SK-N-SH (cell line): ENCODE measurements at regions of chr10 and their contacts with region 1.

Region 1: GRCh38 chr10:12902135-12902572 is 99.4 kb downstream of the CCDC3 start:
- DNase-seq: peak; percentile 83
- H3K4me3 ChIP-seq: no peak overlapping the region; a peak in 1 of 4 replicates
- H3K27ac ChIP-seq: no peak overlapping the region
- H3K4me1 ChIP-seq: no peaks in the 10 kb centered on the region
- H3K27me3 ChIP-seq: no peaks in the 10 kb centered on the region; the same call in 1 of the 2 replicates
- CTCF ChIP-seq: peak; percentile 86
- EP300 ChIP-seq: no peak
- RAD21 ChIP-seq: peak; percentile 89

Region 2: GRCh38 chr10:12782537-12782936 is 119.6 kb before region 1 on chr10:
- CTCF ChIA-PET with region 1: interaction called, 51 read pairs
- POLR2A ChIA-PET with region 1: no interaction called
- DNase-seq: peak; percentile 64
- H3K4me3 ChIP-seq: peak overlapping the region in 1 of 2 experiments; percentile 26; a peak in 1 of 4 replicates
- H3K27ac ChIP-seq: no peak overlapping the region; a peak in 1 of 4 replicates
- H3K4me1 ChIP-seq: peaks cover 0 to 8% of the 10 kb centered on the region in 2 experiments; a peak in 2 of 4 replicates
- H3K27me3 ChIP-seq: no peaks in the 10 kb centered on the region
- CTCF ChIP-seq: peak; percentile 75
- EP300 ChIP-seq: no peak
- RAD21 ChIP-seq: peak; percentile 59

Region 3: DNA sequence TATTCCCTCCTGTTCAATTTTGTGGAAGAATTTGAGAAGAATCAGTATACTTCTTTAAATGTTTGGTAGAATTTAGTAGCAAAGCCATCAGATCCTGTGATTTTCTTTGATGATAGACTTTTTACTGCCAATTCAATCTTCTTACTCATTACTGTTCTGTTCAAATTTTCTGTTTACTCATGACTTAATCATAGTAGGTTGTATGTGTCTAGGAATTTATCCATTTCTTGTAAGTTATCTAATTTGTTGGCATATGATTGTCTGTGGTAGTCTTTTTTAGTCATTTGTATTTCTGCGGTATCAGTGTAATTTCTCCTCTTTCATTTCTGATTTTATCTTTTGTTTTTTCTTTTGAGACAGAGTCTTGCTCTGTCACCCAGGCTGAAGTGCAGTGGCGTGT is 12.0 kb after region 1 on chr10:
- CTCF ChIA-PET with region 1: interaction called, 15 read pairs
- POLR2A ChIA-PET with region 1: no interaction called
- DNase-seq: no peak
- H3K4me3 ChIP-seq: no peak overlapping the region
- H3K27ac ChIP-seq: no peak overlapping the region
- H3K4me1 ChIP-seq: no peaks in the 10 kb centered on the region
- H3K27me3 ChIP-seq: no peaks in the 10 kb centered on the region
- CTCF ChIP-seq: no peak
- EP300 ChIP-seq: no peak
- RAD21 ChIP-seq: no peak

Region 4: DNA sequence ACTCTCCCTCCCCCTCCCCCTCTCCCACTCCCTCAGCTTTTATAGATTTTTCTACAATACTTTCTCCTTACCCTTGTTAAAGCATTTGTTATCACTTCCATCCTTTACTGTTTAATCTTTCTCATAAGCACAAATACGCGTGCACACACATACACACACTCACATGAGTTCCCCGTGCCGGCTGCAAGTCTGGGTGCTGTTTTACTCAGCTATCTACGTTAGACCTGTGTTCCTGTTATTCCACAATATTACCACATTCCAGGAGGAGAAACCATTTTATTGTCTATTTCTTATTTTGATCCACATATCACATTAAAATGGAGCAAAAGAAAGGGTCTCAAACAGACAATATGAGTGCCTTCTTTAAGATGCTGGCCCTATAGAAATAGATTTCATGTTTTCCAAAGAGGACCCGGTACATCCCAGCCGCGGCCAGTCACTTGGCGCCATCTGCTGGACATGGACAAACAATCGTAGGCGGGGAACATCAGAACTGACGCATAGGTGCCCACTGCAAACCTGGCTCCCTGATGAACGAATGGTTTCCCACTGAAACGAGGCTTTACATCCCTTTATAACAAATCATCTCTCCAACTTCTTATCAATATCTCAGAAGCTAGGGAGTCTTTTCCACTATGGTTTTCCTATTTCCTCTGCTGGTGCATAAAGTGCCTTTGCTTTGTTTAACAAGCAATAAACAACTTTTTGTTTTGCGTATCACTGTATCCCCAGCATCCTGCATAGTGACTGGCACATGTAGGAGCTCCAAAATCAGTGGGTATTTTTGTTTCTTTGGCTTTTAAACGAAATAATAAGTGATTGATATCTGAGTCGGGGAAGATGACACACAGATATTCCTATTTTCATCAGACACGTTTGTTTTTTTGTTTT is 172.7 kb after region 1 on chr10:
- CTCF ChIA-PET with region 1: interaction called, 17 read pairs
- POLR2A ChIA-PET with region 1: no interaction called
- DNase-seq: peak; percentile 83
- H3K4me3 ChIP-seq: peak overlapping the region in 1 of 2 experiments; percentile 21; a peak in 1 of 4 replicates
- H3K27ac ChIP-seq: no peak overlapping the region
- H3K4me1 ChIP-seq: no peaks in the 10 kb centered on the region
- H3K27me3 ChIP-seq: no peaks in the 10 kb centered on the region
- CTCF ChIP-seq: peak; percentile 90
- EP300 ChIP-seq: no peak
- RAD21 ChIP-seq: peak; percentile 96